ENCODE measurements at regions of chr2 and their contacts with region 1.

Region 1: GRCh38 chr2:53535234-53535840 is 232.3 kb upstream of the CHAC2 start:
- DNase-seq: no peak
- H3K4me3 ChIP-seq: no peak overlapping the region
- H3K4me3 Mint-ChIP-seq: no peak overlapping the region
- H3K27ac ChIP-seq: no peak overlapping the region
- H3K27ac Mint-ChIP-seq: no peak overlapping the region
- H3K4me1 ChIP-seq: no peaks in the 10 kb centered on the region
- H3K4me1 Mint-ChIP-seq: no peaks in the 10 kb centered on the region
- H3K27me3 ChIP-seq: no peaks in the 10 kb centered on the region
- H3K27me3 Mint-ChIP-seq: peaks cover 6% of the 10 kb centered on the region in 2 donors

Region 2: GRCh38 chr2:52964916-52965530 is 570.3 kb before region 1 on chr2:
- CTCF ChIA-PET with region 1: no interaction called
- POLR2A ChIA-PET with region 1: no interaction called
- intact Hi-C with region 1: loop called (anchors 5 kb)
- DNase-seq: no peak
- H3K4me3 ChIP-seq: no peak overlapping the region
- H3K4me3 Mint-ChIP-seq: no peak overlapping the region
- H3K27ac ChIP-seq: no peak overlapping the region
- H3K27ac Mint-ChIP-seq: no peak overlapping the region
- H3K4me1 ChIP-seq: no peaks in the 10 kb centered on the region
- H3K4me1 Mint-ChIP-seq: no peaks in the 10 kb centered on the region
- H3K27me3 ChIP-seq: no peaks in the 10 kb centered on the region
- H3K27me3 Mint-ChIP-seq: no peaks in the 10 kb centered on the region

Region 3: GRCh38 chr2:53490659-53491058 is 44.7 kb before region 1 on chr2:
- CTCF ChIA-PET with region 1: no interaction called
- POLR2A ChIA-PET with region 1: no interaction called
- intact Hi-C with region 1: no loop called
- DNase-seq: no peak
- H3K4me3 ChIP-seq: no peak overlapping the region
- H3K4me3 Mint-ChIP-seq: no peak overlapping the region
- H3K27ac ChIP-seq: no peak overlapping the region
- H3K27ac Mint-ChIP-seq: no peak overlapping the region
- H3K4me1 ChIP-seq: no peaks in the 10 kb centered on the region
- H3K4me1 Mint-ChIP-seq: no peaks in the 10 kb centered on the region
- H3K27me3 ChIP-seq: no peaks in the 10 kb centered on the region
- H3K27me3 Mint-ChIP-seq: peaks cover 0 to 1% of the 10 kb centered on the region in 2 donors

Region 4: DNA sequence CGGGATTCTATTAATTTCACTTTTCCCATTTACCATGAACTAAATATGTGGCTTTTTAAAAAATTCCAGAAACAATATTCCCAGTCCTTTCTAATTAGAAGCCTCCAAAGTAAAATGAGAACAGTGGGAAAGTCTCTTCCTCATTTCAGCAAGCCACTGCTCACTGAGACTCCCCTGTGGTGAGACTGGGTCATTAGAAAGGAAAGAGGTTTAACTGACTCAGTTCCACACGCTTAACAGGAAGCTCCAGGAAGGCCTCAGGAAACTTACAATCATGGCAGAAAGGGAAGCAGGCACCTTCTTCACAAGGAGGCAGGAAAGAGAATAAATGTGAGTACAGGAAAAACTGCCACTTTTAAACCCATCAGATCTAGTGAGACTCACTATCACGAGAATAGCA is 26.7 kb before region 1 on chr2:
- CTCF ChIA-PET with region 1: no interaction called
- POLR2A ChIA-PET with region 1: no interaction called
- intact Hi-C with region 1: no loop called
- DNase-seq: no peak
- H3K4me3 ChIP-seq: no peak overlapping the region
- H3K4me3 Mint-ChIP-seq: no peak overlapping the region
- H3K27ac ChIP-seq: no peak overlapping the region
- H3K27ac Mint-ChIP-seq: no peak overlapping the region
- H3K4me1 ChIP-seq: no peaks in the 10 kb centered on the region
- H3K4me1 Mint-ChIP-seq: no peaks in the 10 kb centered on the region
- H3K27me3 ChIP-seq: no peaks in the 10 kb centered on the region
- H3K27me3 Mint-ChIP-seq: peaks cover 0 to 2% of the 10 kb centered on the region in 2 donors

Region 5: DNA sequence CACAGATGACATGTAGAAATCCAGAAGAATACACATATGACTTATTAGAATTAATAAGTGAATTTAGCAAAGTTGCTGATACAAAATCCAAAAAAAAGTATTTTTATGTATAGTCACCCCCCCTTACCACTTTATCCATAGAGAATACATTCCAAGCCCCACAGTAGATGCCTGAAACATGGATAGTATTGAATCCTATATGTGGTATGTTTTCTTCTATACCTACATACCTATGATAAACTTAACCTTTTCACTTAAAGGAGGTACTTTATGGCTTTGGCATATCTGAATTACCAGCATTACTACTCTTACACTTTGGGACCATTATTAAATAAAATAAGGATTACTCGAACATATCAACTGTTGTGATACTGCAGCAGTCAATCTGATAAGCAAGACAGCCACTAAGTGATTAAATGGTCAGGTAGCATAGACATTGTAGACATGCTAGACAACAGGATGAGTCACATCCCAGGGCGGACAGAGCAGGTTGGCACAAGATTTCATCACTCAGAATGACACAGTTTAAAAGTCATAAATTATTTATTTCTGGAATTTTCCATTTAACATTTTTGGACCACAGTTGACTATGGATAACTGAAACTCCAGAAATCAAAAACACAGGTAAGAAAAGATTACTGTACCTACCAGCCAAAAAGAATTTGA is 24.1 kb after region 1 on chr2:
- CTCF ChIA-PET with region 1: no interaction called
- POLR2A ChIA-PET with region 1: no interaction called
- intact Hi-C with region 1: no loop called
- DNase-seq: no peak
- H3K4me3 ChIP-seq: no peak overlapping the region
- H3K4me3 Mint-ChIP-seq: no peak overlapping the region
- H3K27ac ChIP-seq: no peak overlapping the region
- H3K27ac Mint-ChIP-seq: no peak overlapping the region
- H3K4me1 ChIP-seq: no peaks in the 10 kb centered on the region
- H3K4me1 Mint-ChIP-seq: no peaks in the 10 kb centered on the region
- H3K27me3 ChIP-seq: no peaks in the 10 kb centered on the region
- H3K27me3 Mint-ChIP-seq: peaks cover 0 to 3% of the 10 kb centered on the region in 2 donors